Left colon (tissue), 2 donors: ENCODE measurements at regions of chr12 and their contacts with region 1.

Region 1: DNA sequence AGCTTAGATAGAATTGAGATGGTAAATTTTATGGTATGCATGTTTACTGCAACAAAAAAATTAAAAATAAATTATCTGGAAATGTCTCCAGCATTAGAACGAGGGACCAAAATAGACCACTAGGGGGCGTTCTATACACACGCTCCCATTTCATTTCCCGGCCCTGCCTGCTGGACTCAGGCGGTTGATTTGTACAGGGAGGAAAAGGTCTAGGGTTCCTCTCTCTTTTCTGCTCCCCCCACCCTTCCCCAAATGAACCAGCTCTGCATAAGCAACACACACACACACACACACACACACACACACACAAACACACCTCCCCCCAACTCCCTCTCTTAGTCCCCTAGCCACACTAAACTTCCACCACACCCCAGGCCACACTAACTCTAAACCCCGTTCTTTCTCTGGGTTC is 7.8 kb upstream of the DTX1 start:
- DNase-seq: peak in 1 of 2 donors; percentile 58
- ATAC-seq: peak; percentile 81

Region 2: DNA sequence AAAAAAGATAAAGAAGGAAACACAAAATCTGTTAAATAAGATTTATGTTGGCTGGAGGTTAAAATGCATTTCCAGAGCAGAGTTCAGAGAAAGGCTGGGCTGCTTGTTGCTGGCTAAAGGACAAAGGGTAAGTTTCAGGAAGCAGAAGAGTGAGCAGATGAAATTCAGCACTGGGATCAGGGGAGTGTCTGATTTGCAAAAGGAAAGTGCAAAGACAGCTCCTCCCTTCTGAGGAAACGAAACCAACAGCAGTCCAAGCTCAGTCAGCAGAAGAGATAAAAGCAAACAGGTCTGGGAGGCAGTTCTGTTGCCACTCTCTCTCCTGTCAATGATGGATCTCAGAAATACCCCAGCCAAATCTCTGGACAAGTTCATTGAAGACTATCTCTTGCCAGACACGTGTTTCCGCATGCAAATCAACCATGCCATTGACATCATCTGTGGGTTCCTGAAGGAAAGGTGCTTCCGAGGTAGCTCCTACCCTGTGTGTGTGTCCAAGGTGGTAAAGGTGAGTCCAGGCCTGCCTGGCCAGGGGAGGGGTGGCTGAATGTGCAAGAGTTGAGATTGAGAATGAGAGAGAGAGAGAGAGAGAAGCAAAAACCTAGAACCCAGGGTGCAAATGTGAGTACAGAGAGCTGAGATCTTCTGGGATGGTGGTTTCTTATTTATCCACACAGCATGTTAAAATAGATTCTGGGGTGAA is 141.9 kb before region 1 on chr12 and contains the start of gene OAS1:
- intact Hi-C with region 1: no loop called
- DNase-seq: peak; percentile 38 to 73
- ATAC-seq: peak; percentile 86
- total RNA-seq, gene OAS1: 97.4 to 104 TPM

Region 3: GRCh38 chr12:113030875-113031525 is 17.7 kb before region 1 on chr12:
- intact Hi-C with region 1: no loop called
- DNase-seq: no peak
- ATAC-seq: peak; percentile 42

Region 4: DNA sequence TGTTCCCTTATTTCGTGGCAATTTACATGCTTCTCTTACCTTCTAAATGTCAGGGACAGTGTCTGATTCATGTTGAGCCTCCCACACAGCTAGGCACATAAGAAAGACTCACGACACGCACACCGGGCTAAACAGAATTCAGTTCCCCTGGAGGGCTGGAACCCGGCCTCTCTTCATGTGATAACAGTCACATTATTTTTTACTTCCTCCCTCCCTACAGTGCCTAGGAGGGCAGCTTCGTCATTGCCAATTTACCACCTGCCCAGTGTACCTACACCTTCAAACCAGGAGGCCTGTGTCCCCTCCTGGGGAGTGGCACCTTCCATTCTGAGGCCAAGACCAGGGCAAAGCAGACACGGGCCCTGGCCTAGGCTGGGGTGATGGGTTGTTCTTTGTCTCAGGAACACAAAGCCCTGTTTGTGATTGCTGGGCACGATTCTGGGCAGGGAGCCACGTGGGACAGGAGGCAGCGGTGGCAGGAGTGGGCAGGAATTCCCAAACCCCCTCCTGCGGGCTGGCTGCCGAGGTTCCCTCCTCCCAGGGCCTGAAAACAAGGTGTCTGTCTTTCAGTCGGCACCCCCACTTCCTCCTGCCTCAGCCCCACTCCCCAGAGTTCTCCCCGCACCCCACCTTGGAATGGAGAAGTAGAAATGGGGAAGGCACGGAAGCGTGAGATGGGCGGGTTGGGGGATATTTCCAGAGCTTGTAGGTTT is 93.6 kb after region 1 on chr12:
- intact Hi-C with region 1: no loop called
- DNase-seq: peak; percentile 66 to 83
- ATAC-seq: peak; percentile 84

Region 5: GRCh38 chr12:113152835-113153814 is 104.4 kb after region 1 on chr12:
- intact Hi-C with region 1: loop called in 1 of 2 experiments (anchors 10 kb)
- DNase-seq: peak; percentile 62 to 78
- ATAC-seq: peak; percentile 90

Region 6: GRCh38 chr12:113174461-113175384 is 126.0 kb after region 1 on chr12:
- intact Hi-C with region 1: loop called in 1 of 2 experiments (anchors 5 kb)
- DNase-seq: peak; percentile 44 to 81
- ATAC-seq: peak; percentile 80